Natural killer cell (primary cell): ENCODE measurements at regions of chr10 and their contacts with region 1.

Region 1: GRCh38 chr10:6473901-6474370 is 106.1 kb downstream of the PRKCQ start:
- DNase-seq: peak; percentile 34 to 81
- ATAC-seq: peak; percentile 78 to 86 (median 83)
- H3K4me3 ChIP-seq: peak overlapping the region; percentile 39
- H3K4me3 Mint-ChIP-seq: peak overlapping the region; percentile 94
- H3K27ac ChIP-seq: peak overlapping the region; percentile 97
- H3K27ac Mint-ChIP-seq: peak overlapping the region; percentile 99
- H3K4me1 ChIP-seq: peaks cover 21% of the 10 kb centered on the region
- H3K4me1 Mint-ChIP-seq: peaks cover 51 to 64% of the 10 kb centered on the region in 2 donors
- H3K27me3 ChIP-seq: no peaks in the 10 kb centered on the region
- H3K27me3 Mint-ChIP-seq: no peaks in the 10 kb centered on the region
- CTCF ChIP-seq: no peak

Region 2: GRCh38 chr10:6491841-6492609 is 18.1 kb after region 1 on chr10:
- intact Hi-C with region 1: loop called (anchors 1 kb)
- DNase-seq: peak; percentile 42 to 88
- ATAC-seq: peak; percentile 69 to 89 (median 88)
- H3K4me3 ChIP-seq: peak overlapping the region; percentile 52
- H3K4me3 Mint-ChIP-seq: no peak overlapping the region
- H3K27ac ChIP-seq: peak overlapping the region; percentile 99
- H3K27ac Mint-ChIP-seq: no peak overlapping the region
- H3K4me1 ChIP-seq: peaks cover 57% of the 10 kb centered on the region
- H3K4me1 Mint-ChIP-seq: peaks cover 3 to 6% of the 10 kb centered on the region in 2 donors
- H3K27me3 ChIP-seq: no peaks in the 10 kb centered on the region
- H3K27me3 Mint-ChIP-seq: no peaks in the 10 kb centered on the region
- CTCF ChIP-seq: no peak

Region 3: DNA sequence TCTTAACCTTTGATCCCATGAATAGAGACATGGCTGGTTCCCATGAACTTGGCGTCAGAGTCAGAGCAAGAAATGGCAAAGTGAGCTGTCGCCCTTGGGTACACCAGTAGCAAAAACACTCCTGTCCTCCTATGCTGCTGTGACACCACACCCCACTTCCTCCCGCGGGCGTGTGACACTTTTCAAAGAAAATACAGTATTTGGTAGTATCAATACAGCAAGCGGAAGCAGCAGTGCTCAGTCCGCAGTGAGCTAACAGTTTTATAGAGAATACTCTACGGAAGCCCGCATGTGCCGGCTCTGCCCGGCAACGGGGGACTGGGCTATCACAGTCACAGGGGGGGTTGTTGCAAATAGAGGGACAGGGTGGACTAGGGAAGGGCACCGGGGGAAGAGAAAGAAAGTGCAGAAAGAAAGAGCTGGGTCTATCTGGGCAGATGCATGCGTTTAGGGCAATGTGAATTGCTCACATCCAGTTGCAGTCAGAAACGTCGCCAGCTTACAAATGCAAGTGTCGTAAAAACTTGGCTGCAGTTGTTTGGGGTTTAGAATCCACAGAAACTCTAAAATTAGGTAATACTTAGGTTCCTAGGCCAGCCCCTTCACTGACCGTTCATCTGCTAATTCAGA is 56.4 kb after region 1 on chr10:
- intact Hi-C with region 1: loop called (anchors 1 kb)
- DNase-seq: peak; percentile 69 to 88
- ATAC-seq: peak; percentile 87 to 93 (median 90)
- H3K4me3 ChIP-seq: peak overlapping the region; percentile 11
- H3K4me3 Mint-ChIP-seq: peak overlapping the region; percentile 96
- H3K27ac ChIP-seq: peak overlapping the region; percentile 89
- H3K27ac Mint-ChIP-seq: peak overlapping the region; percentile 98
- H3K4me1 ChIP-seq: peaks cover 47% of the 10 kb centered on the region
- H3K4me1 Mint-ChIP-seq: peaks cover 75 to 88% of the 10 kb centered on the region in 2 donors
- H3K27me3 ChIP-seq: no peaks in the 10 kb centered on the region
- H3K27me3 Mint-ChIP-seq: no peaks in the 10 kb centered on the region
- CTCF ChIP-seq: no peak

Region 4: GRCh38 chr10:6542999-6543430 is 69.1 kb after region 1 on chr10:
- intact Hi-C with region 1: loop called (anchors 1 kb)
- DNase-seq: peak; percentile 21 to 82
- ATAC-seq: peak; percentile 61 to 74 (median 65)
- H3K4me3 ChIP-seq: peak overlapping the region; percentile 19
- H3K4me3 Mint-ChIP-seq: peak overlapping the region; percentile 98
- H3K27ac ChIP-seq: peak overlapping the region; percentile 81
- H3K27ac Mint-ChIP-seq: peak overlapping the region; percentile 98 to 100
- H3K4me1 ChIP-seq: peaks cover 33% of the 10 kb centered on the region
- H3K4me1 Mint-ChIP-seq: peaks cover 65 to 66% of the 10 kb centered on the region in 2 donors
- H3K27me3 ChIP-seq: no peaks in the 10 kb centered on the region
- H3K27me3 Mint-ChIP-seq: no peaks in the 10 kb centered on the region
- CTCF ChIP-seq: no peak

Region 5: DNA sequence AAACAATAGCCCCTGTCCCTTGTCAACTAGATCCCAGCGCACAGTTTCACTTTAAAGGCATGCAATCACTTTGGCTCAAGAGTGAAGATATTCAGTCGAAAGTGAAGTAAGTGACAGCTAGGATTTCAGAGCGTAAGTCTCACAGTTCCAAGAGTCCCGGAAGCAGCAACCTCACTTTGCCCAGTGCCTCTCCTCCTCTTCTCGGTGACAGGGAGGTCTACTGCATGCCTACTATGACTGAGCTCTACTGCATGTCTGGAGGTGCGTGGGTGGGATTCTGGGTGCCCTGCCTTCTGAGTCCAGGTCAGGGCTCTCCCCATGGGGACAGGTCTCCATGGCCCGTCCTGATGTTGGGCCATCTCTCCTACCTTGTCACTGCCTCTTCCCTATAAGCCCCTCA is 89.1 kb after region 1 on chr10:
- intact Hi-C with region 1: loop called (anchors 1 kb)
- DNase-seq: peak in 1 of 2 donors; percentile 63
- ATAC-seq: peak; percentile 70 to 77 (median 71)
- H3K4me3 ChIP-seq: no peak overlapping the region
- H3K4me3 Mint-ChIP-seq: peak overlapping the region; percentile 65
- H3K27ac ChIP-seq: peak overlapping the region; percentile 75
- H3K27ac Mint-ChIP-seq: peak overlapping the region; percentile 84 to 95
- H3K4me1 ChIP-seq: peaks cover 44% of the 10 kb centered on the region
- H3K4me1 Mint-ChIP-seq: peaks cover 79 to 84% of the 10 kb centered on the region in 2 donors
- H3K27me3 ChIP-seq: no peaks in the 10 kb centered on the region
- H3K27me3 Mint-ChIP-seq: no peaks in the 10 kb centered on the region
- CTCF ChIP-seq: no peak

Region 6: GRCh38 chr10:6580279-6581029 is 106.5 kb after region 1 on chr10:
- intact Hi-C with region 1: loop called (anchors 1 kb)
- DNase-seq: peak; percentile 87 to 92
- ATAC-seq: peak; percentile 75 to 92 (median 87)
- H3K4me3 ChIP-seq: peak overlapping the region; percentile 67
- H3K4me3 Mint-ChIP-seq: peak overlapping the region; percentile 95
- H3K27ac ChIP-seq: peak overlapping the region; percentile 89
- H3K27ac Mint-ChIP-seq: peak overlapping the region; percentile 85 to 92
- H3K4me1 ChIP-seq: peaks cover 51% of the 10 kb centered on the region
- H3K4me1 Mint-ChIP-seq: peaks cover 79 to 90% of the 10 kb centered on the region in 2 donors
- H3K27me3 ChIP-seq: no peaks in the 10 kb centered on the region
- H3K27me3 Mint-ChIP-seq: no peaks in the 10 kb centered on the region
- CTCF ChIP-seq: peak; percentile 68

Region 7: DNA sequence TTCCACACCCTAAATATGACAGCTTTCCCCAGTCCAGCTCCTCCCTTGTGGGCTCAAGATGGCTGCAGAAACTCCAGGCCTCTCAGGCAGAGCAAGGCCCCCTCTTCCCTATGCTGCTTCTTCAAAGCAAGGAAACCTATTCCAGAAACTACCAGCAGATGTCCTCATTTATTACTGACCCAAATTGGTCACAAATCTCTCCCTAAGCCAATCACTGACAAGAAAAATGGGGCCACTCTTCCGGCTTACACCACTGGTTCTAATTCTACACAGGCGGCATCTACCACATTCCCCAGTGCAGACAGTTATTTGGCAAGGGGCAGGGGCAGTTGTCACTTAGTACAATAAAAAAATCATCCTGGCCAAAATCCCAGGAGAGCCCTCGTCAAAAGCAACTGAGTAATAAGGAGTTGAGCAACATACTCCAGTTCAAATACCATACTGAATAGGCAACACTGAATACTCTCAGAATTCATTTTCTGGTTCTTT is 786.5 kb after region 1 on chr10:
- intact Hi-C with region 1: loop called (anchors 10 kb)
- DNase-seq: peak in 1 of 2 donors; percentile 72
- ATAC-seq: peak; percentile 54 to 73 (median 70)
- H3K4me3 ChIP-seq: no peak overlapping the region
- H3K4me3 Mint-ChIP-seq: peak overlapping the region; percentile 79
- H3K27ac ChIP-seq: no peak overlapping the region
- H3K27ac Mint-ChIP-seq: peak overlapping the region; percentile 86 to 91
- H3K4me1 ChIP-seq: peaks cover 44% of the 10 kb centered on the region
- H3K4me1 Mint-ChIP-seq: peaks cover 55 to 58% of the 10 kb centered on the region in 2 donors
- H3K27me3 ChIP-seq: no peaks in the 10 kb centered on the region
- H3K27me3 Mint-ChIP-seq: no peaks in the 10 kb centered on the region
- CTCF ChIP-seq: peak; percentile 54